ENCODE measurements at regions of chr10 and their contacts with region 1.

Region 1: DNA sequence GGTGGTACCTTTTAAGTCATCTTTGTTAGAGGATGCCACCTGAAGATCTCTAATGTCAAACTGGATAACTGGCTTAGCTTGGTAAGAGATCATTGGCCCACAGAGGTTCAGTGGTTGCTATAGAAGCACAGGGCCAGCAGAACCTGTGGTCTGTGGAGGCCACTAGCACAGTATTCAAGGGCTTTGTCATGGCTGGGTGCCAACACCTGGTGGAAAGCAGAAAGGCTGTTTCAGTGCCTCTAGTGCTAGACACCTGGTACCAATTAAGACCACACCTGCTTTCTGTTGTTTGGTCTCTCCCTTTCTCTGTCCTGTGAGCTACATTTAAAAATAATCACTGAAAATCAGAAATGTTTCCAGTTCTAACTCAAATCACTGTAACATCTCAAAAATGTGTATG is 10.0 kb upstream of the PCGF5 start:
- DNase-seq: peak; percentile 49
- H3K4me3 Mint-ChIP-seq: no peak overlapping the region
- H3K27ac Mint-ChIP-seq: no peak overlapping the region
- H3K4me1 Mint-ChIP-seq: peaks cover 67% of the 10 kb centered on the region
- H3K27me3 Mint-ChIP-seq: no peaks in the 10 kb centered on the region

Region 2: GRCh38 chr10:91190876-91191583 is 19.4 kb before region 1 on chr10:
- CTCF ChIA-PET with region 1: no interaction called
- POLR2A ChIA-PET with region 1: no interaction called
- intact Hi-C with region 1: loop called (anchors 1 kb)
- DNase-seq: no peak
- H3K4me3 Mint-ChIP-seq: no peak overlapping the region
- H3K27ac Mint-ChIP-seq: no peak overlapping the region
- H3K4me1 Mint-ChIP-seq: peaks cover 74% of the 10 kb centered on the region
- H3K27me3 Mint-ChIP-seq: no peaks in the 10 kb centered on the region

Region 3: DNA sequence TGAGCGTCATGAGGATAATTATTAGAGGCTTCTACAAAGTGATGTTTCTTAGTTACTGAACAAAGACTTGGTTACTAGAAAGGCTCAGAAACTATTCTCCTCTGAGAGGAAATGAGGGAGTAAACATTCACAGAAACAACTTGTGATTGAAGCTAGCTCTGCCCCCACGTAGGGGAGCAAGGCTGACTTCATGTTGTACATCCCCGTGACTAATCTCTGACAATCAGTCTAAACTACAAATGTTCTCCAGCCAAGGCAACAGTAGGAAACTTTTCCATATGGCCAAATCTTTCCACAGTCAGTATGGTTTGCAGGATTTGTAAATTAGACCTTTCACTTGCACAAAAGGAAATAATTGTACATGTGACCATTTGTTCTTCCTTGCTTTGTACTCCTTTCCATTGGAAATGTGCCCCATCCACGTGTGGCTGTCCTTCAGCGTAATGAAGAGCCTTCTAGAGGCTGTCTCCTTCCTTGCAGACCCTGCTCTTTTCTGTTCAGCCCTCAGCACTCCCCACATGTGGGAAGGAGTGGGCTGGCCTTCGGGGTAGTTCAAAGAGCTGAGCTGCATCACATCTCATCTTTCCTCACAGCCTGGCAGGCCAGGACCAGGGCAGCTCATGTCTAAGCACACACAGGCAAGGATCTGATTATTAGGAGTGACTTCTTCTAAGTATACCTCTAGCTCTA is 103.5 kb after region 1 on chr10:
- CTCF ChIA-PET with region 1: no interaction called
- POLR2A ChIA-PET with region 1: no interaction called
- intact Hi-C with region 1: no loop called
- DNase-seq: peak; percentile 43
- H3K4me3 Mint-ChIP-seq: no peak overlapping the region
- H3K27ac Mint-ChIP-seq: no peak overlapping the region
- H3K4me1 Mint-ChIP-seq: peaks cover 10% of the 10 kb centered on the region
- H3K27me3 Mint-ChIP-seq: peaks cover 10% of the 10 kb centered on the region